MCF 10A (cell line): ENCODE measurements at regions of chr17 and their contacts with region 1.

Region 1: DNA sequence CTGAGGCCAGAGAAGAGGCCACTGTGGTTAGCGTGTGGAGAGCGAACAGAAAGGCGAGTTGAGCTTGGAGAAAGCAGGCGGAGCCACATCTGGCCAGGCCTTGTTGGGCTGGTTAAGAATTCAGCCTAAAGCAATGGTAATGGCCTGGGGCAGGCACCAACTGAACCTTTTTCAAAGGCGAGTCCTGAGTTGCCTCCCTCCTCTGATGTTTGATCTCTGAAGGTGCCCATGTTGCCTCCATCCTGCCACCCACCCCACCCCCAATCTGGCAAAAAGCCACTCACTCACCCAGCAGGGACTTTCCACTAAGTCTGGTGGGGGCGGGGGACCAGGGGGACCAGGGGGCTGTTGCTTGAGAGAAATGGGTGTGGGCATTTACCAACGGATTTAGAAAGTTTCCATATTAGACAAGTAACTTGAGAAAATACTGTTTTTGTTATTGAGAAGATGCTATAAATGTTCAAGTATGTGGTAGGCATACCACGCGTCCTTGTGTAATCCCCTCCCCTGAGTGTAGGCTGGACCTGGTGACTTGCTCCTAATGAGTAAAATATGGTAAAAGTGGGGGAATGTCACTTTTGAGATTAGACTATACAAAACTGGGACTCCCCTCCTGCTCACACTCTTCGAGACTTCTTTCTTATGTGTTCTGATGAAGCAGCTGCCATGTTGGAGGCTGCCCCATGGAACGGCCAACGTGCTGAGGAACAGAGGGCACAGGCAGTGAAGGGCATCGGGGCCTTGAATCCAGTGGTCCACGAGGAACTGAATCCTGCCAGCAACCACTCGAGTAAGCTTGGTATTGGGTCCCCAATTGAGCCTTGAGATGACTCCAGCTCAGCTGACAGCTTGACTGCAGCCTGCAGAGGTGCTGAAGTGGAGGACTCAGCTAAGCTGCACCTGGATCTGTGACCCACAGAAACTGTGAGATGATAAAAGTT is 29.9 kb upstream of the TNS4 start:
- DNase-seq: no peak
- H3K4me3 Mint-ChIP-seq: no peak overlapping the region
- H3K27ac Mint-ChIP-seq: peak overlapping the region; percentile 24
- H3K4me1 Mint-ChIP-seq: peaks cover 37% of the 10 kb centered on the region
- H3K27me3 Mint-ChIP-seq: no peaks in the 10 kb centered on the region
- CTCF ChIP-seq: no peak

Region 2: DNA sequence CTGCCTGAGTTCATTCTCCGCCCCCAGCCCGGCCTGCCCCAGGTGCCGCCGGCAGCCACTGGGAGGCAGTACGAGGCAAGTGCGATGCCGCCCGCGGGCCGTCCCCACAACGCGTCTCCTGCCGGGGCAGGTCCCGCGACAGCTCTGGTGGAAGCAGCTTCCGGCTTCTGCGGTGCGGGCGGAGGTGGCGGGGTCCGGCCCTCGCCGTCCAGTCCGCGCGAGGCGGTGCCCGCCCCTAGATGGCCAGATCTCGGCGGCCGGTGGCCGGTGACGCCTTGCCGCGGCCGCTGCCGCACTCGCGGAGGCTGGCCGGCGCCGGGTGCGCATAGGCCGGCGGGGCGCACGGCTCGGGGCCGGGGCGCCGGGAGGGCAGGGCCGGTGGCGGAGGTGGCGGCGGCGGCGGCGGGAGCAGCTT is 168.6 kb before region 1 on chr17:
- CTCF ChIA-PET with region 1: interaction called, 11 read pairs
- POLR2A ChIA-PET with region 1: interaction called, 3 read pairs
- intact Hi-C with region 1: loop called (anchors 1 kb)
- DNase-seq: peak; percentile 74
- H3K4me3 Mint-ChIP-seq: peak overlapping the region; percentile 69
- H3K27ac Mint-ChIP-seq: no peak overlapping the region
- H3K4me1 Mint-ChIP-seq: peaks cover 11% of the 10 kb centered on the region
- H3K27me3 Mint-ChIP-seq: no peaks in the 10 kb centered on the region
- CTCF ChIP-seq: peak; percentile 72

Region 3: GRCh38 chr17:40417609-40418427 is 113.5 kb before region 1 on chr17 and contains the start of gene TOP2A:
- CTCF ChIA-PET with region 1: interaction called, 6 read pairs
- POLR2A ChIA-PET with region 1: interaction called, 15 read pairs
- intact Hi-C with region 1: no loop called
- DNase-seq: peak; percentile 100
- H3K4me3 Mint-ChIP-seq: peak within 1 kb of the TSS; percentile 96
- H3K27ac Mint-ChIP-seq: peak within 1 kb of the TSS; percentile 82
- H3K4me1 Mint-ChIP-seq: peaks cover 8% of the 10 kb centered on the region
- H3K27me3 Mint-ChIP-seq: no peaks in the 10 kb centered on the region
- CTCF ChIP-seq: no peak
- total RNA-seq, gene TOP2A: 100 and 151 TPM in 2 replicates

Region 4: GRCh38 chr17:40490289-40490853 is 41.0 kb before region 1 on chr17:
- CTCF ChIA-PET with region 1: interaction called, 9 read pairs
- POLR2A ChIA-PET with region 1: interaction called, 614 read pairs
- intact Hi-C with region 1: loop called (anchors 1 kb)
- DNase-seq: peak; percentile 93
- H3K4me3 Mint-ChIP-seq: peak overlapping the region; percentile 98
- H3K27ac Mint-ChIP-seq: peak overlapping the region; percentile 83
- H3K4me1 Mint-ChIP-seq: peaks cover 70% of the 10 kb centered on the region
- H3K27me3 Mint-ChIP-seq: no peaks in the 10 kb centered on the region
- CTCF ChIP-seq: no peak

Region 5: DNA sequence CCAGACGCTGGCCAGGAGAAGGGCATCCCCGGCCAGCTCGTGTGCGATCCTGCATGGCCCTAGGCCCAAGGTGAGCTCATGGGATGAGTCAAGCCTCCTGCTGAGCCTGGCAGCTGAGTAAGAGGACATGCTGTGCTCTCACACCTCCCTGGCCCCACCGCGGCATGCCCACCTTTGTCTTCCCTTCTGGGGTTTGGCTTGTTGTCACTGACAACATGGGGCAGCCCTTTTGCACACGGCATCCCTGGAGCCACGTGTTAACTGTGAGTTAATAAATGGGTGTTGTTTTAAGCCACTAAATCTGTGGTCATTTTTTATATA is 21.0 kb before region 1 on chr17:
- CTCF ChIA-PET with region 1: interaction called, 7 read pairs
- POLR2A ChIA-PET with region 1: interaction called, 17 read pairs
- intact Hi-C with region 1: no loop called
- DNase-seq: peak; percentile 99
- H3K4me3 Mint-ChIP-seq: peak overlapping the region; percentile 48
- H3K27ac Mint-ChIP-seq: peak overlapping the region; percentile 95
- H3K4me1 Mint-ChIP-seq: peaks cover 56% of the 10 kb centered on the region
- H3K27me3 Mint-ChIP-seq: no peaks in the 10 kb centered on the region
- CTCF ChIP-seq: no peak

Region 6: DNA sequence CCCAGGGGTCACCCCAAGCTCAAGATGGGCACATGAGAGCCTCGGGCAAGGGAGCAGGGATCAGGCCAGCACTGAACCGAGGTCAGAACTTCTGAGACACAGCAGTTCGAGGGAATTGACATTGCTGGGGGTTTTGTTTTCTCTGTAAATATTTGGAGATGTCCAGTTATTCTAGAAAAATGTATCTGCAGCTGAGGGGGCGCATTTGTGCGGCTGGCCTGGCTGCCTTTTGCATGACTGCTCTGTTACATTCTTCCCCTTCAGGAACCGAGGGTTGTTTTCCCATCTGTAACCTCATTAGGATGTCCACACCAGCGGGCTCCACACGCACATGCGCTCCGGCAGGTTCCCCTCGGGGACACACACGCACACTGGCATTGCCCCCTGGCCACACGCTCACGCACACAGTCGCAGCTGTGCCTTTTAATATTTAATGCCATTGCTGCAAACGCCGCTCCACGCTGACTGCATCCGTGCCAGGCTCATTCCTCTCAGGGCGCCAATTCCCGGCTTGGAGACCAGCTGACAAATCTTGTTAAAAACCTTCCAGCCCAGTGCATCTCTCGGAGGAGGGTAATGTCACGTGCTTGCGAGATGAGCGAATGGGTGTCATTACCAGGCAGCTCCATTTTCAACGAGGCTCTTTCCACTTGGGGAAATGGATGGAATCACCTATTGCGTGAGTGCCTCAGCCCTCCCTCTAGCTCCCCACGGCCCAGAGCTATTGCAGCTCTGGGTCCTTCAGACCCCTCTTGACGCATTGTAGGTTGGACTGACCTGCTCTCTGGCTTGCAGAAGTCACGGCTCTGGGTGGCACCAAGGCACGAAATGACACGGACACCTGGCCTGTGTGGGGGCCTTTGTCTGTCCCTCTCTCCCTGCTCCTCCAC is 20.8 kb after region 1 on chr17:
- CTCF ChIA-PET with region 1: interaction called, 26 read pairs
- POLR2A ChIA-PET with region 1: interaction called, 49 read pairs
- intact Hi-C with region 1: no loop called
- DNase-seq: peak; percentile 65
- H3K4me3 Mint-ChIP-seq: no peak overlapping the region
- H3K27ac Mint-ChIP-seq: no peak overlapping the region
- H3K4me1 Mint-ChIP-seq: peaks cover 32% of the 10 kb centered on the region
- H3K27me3 Mint-ChIP-seq: no peaks in the 10 kb centered on the region
- CTCF ChIP-seq: no peak